ENCODE measurements at regions of chr11 and their contacts with region 1.

Region 1: GRCh38 chr11:67401495-67402191 is at the start of gene PPP1CA:
- DNase-seq: peak; percentile 85
- H3K4me3 ChIP-seq: peak within 1 kb of the TSS; percentile 79 to 89 (median 89)
- H3K27ac ChIP-seq: peak within 1 kb of the TSS; percentile 81
- H3K4me1 ChIP-seq: peaks cover 18% of the 10 kb centered on the region
- H3K27me3 ChIP-seq: no peaks in the 10 kb centered on the region
- CTCF ChIP-seq: peak in 1 of 2 donors; percentile 26
- POLR2A ChIP-seq: peak; percentile 90
- total RNA-seq, gene PPP1CA: 192 and 202 TPM in 2 replicates

Region 2: GRCh38 chr11:67373925-67374618 is 27.6 kb before region 1 on chr11:
- CTCF ChIA-PET with region 1: interaction called, 30 read pairs
- POLR2A ChIA-PET with region 1: interaction called, 4 read pairs
- dilution Hi-C with region 1: no loop called
- intact Hi-C with region 1: no loop called
- DNase-seq: peak; percentile 82
- H3K4me3 ChIP-seq: peak overlapping the region; percentile 28 to 86 (median 64)
- H3K27ac ChIP-seq: peak overlapping the region; percentile 33
- H3K4me1 ChIP-seq: peaks cover 37% of the 10 kb centered on the region
- H3K27me3 ChIP-seq: peaks cover 0 to 3% of the 10 kb centered on the region in 2 experiments
- CTCF ChIP-seq: peak; percentile 60 to 79
- POLR2A ChIP-seq: peak; percentile 58

Region 3: GRCh38 chr11:67391304-67392132 is 10.1 kb before region 1 on chr11 and contains the start of gene RAD9A:
- CTCF ChIA-PET with region 1: interaction called, 32 read pairs
- POLR2A ChIA-PET with region 1: interaction called, 11 read pairs
- dilution Hi-C with region 1: no loop called
- intact Hi-C with region 1: loop called (anchors 1 kb)
- DNase-seq: peak; percentile 90
- H3K4me3 ChIP-seq: peak within 1 kb of the TSS; percentile 68 to 80 (median 76)
- H3K27ac ChIP-seq: peak within 1 kb of the TSS; percentile 56
- H3K4me1 ChIP-seq: peaks cover 10% of the 10 kb centered on the region
- H3K27me3 ChIP-seq: no peaks in the 10 kb centered on the region
- CTCF ChIP-seq: no peak
- POLR2A ChIP-seq: peak; percentile 82
- total RNA-seq, gene RAD9A: 18.4 and 24.6 TPM in 2 replicates

Region 4: DNA sequence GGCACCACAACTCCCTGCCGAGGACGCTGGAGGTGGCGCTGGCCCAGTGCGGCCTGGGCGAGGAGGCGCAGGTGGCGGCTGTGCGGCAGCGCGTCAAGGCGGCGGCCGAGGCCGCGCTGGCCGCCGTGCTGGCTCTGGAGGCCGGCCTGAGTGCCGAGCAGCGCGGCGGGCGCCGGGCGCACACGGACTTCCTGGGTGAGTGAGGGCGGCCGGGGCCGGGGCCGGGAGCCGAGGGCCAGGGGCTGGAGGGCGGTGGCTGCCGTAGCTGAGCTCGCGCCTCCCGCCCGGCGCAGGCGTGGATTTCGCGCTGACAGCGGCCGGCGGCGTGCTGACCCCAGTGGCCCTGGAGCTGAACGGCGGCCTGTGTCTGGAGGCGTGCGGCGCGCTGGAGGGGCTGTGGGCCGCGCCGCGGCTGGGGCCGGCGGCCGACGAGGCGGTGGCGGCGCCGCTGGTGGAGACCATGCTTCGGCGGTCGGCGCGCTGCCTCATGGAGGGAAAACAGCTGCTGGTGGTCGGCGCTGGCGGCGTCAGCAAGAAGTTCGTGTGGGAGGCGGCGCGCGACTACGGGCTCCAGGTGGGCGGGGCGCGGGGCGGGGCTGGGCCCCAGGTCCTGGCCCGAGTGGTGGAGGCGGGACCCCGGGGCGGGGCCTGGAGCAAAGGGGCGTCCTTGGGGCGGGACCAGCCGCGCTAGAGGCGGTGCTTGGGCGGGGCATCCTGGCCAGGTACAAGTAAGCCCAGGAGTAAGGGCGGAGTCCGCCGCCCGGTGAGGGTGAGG is 19.2 kb after region 1 on chr11:
- CTCF ChIA-PET with region 1: interaction called, 19 read pairs
- POLR2A ChIA-PET with region 1: interaction called, 8 read pairs
- dilution Hi-C with region 1: no loop called
- intact Hi-C with region 1: loop called (anchors 1 kb)
- DNase-seq: peak; percentile 92
- H3K4me3 ChIP-seq: peak overlapping the region in 2 of 3 experiments; percentile 37 to 56
- H3K27ac ChIP-seq: peak overlapping the region; percentile 51
- H3K4me1 ChIP-seq: peaks cover 4% of the 10 kb centered on the region
- H3K27me3 ChIP-seq: peaks cover 0 to 4% of the 10 kb centered on the region in 2 experiments
- CTCF ChIP-seq: no peak
- POLR2A ChIP-seq: peak; percentile 66

Region 5: DNA sequence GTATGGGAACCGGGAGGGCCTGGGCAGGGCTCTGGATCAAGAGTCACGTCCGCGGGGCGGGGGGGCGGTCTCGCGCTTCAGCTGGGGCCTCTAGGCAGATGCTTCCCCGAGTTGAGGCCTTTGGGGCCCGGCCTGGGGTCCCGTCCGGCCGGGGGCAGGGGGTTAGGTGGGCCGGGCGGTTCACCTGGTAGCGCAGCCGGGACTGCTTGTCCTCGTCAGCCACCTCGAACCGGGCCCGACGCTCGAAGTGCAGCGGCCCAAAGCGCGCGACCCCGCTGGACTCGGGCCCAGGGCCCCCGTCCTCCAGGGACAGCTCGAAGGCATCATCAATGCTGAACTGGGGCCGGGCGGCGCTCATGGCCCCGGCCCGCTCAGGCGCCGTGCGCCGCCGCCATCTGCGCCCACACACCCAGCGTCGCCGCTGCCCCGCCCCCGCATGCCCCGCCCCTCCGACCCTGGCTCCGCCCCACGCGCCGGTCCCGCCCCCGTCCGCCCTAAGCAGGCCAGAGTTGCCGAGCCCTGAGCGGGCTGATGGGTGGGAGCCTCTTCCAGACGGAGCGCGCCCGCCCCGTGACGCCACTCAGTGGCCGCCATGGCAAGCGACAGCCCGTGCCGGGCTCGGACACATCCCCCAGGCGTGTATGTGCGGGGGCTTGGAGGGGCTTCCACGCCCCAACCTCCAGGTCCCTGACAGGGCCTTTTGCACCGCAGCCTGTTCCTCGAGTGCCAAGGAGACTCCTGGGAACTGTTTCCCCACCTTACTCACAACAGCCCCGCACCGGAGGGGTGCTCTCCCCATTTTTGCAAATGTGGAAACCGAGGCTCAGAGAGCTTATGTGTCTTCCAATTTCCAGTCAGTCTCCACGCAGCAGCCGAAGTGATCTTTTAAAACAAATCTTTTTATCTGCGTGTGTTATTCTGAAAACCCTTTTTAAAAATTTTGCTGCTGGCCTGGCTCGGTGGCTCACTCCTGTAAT is 67.5 kb after region 1 on chr11 and contains the start of gene TMEM134:
- CTCF ChIA-PET with region 1: interaction called, 26 read pairs
- POLR2A ChIA-PET with region 1: no interaction called
- dilution Hi-C with region 1: no loop called
- intact Hi-C with region 1: loop called (anchors 1 kb)
- DNase-seq: peak; percentile 88
- H3K4me3 ChIP-seq: peak within 1 kb of the TSS; percentile 64 to 79 (median 73)
- H3K27ac ChIP-seq: peak within 1 kb of the TSS; percentile 37
- H3K4me1 ChIP-seq: peaks cover 14% of the 10 kb centered on the region
- H3K27me3 ChIP-seq: no peaks in the 10 kb centered on the region
- CTCF ChIP-seq: peak; percentile 27 to 65
- POLR2A ChIP-seq: peak; percentile 90
- total RNA-seq, gene TMEM134: 33.4 and 41.6 TPM in 2 replicates

Region 6: GRCh38 chr11:67492801-67493547 is 91.3 kb after region 1 on chr11:
- CTCF ChIA-PET with region 1: interaction called, 10 read pairs
- POLR2A ChIA-PET with region 1: no interaction called
- dilution Hi-C with region 1: no loop called
- intact Hi-C with region 1: no loop called
- DNase-seq: no peak
- H3K4me3 ChIP-seq: no peak overlapping the region
- H3K27ac ChIP-seq: no peak overlapping the region
- H3K4me1 ChIP-seq: no peaks in the 10 kb centered on the region
- H3K27me3 ChIP-seq: no peaks in the 10 kb centered on the region
- CTCF ChIP-seq: no peak
- POLR2A ChIP-seq: no peak

Region 7: DNA sequence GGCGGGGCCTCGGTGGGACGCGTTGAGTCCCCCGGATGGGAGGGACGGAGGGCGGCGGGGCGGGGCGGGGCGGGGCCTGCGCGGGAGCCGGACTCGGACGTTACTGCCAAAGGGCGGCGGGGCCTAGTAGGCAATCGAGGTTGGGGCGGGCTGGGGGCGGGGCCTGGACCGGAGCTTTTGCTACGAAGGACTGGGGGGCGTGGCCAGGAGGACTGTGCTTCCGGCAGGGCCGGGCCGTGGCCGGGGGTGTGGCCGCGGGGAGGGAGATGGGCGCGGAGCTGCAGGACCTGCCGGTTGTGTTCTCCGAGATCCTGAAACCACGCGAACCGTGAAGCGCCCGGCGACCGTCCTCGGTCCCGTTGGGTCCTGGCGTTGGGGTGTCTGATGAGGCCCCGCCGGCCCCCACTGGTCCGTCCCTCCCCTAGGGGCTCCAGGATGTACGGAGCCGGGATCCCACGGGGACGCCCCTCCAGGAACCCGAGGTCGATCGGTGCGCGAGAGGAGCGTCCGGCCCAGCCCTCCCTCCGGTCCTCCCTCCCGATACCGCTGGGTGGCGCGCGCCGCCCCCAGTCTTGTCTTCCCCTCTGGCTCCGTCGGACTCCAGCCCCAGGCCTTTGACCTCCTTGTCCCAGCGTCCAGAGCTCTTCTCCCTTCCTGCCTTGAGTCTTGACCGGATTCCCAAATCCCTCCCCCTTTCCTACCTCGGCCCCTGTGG is 228.7 kb after region 1 on chr11:
- CTCF ChIA-PET with region 1: no interaction called
- POLR2A ChIA-PET with region 1: no interaction called
- dilution Hi-C with region 1: no loop called
- intact Hi-C with region 1: no loop called
- DNase-seq: peak; percentile 96
- H3K4me3 ChIP-seq: peak overlapping the region; percentile 39 to 60 (median 55)
- H3K27ac ChIP-seq: peak overlapping the region; percentile 58
- H3K4me1 ChIP-seq: peaks cover 4% of the 10 kb centered on the region
- H3K27me3 ChIP-seq: no peaks in the 10 kb centered on the region
- CTCF ChIP-seq: peak; percentile 79 to 80
- POLR2A ChIP-seq: peak; percentile 75

Region 8: DNA sequence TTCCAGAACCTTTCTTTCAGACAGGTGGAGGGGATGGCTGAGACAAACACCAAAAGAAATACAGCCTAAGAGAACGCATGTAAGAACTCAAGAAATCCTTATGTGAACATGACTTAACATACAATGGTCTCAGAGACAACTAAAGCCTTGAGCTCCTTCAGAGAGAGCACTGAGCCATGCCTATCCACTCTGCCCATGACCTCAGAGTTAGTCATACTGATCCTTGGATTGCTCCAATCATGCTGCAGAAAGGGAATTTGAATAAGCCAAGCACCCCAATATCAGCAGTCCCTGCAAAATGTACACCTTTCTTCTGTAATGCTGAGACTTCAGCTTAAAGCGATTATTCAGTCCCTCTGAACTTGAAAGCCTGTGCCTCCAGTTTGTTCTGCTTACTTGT is 762.8 kb after region 1 on chr11:
- CTCF ChIA-PET with region 1: no interaction called
- POLR2A ChIA-PET with region 1: no interaction called
- dilution Hi-C with region 1: no loop called
- intact Hi-C with region 1: no loop called
- DNase-seq: no peak
- H3K4me3 ChIP-seq: no peak overlapping the region
- H3K27ac ChIP-seq: no peak overlapping the region
- H3K4me1 ChIP-seq: no peaks in the 10 kb centered on the region
- H3K27me3 ChIP-seq: no peaks in the 10 kb centered on the region
- CTCF ChIP-seq: no peak
- POLR2A ChIP-seq: no peak

Region 9: GRCh38 chr11:69027704-69028372 is 1626.2 kb after region 1 on chr11:
- CTCF ChIA-PET with region 1: no interaction called
- POLR2A ChIA-PET with region 1: no interaction called
- dilution Hi-C with region 1: no loop called
- intact Hi-C with region 1: no loop called
- DNase-seq: no peak
- H3K4me3 ChIP-seq: no peak overlapping the region
- H3K27ac ChIP-seq: no peak overlapping the region
- H3K4me1 ChIP-seq: no peaks in the 10 kb centered on the region
- H3K27me3 ChIP-seq: peaks cover 0 to 5% of the 10 kb centered on the region in 2 experiments
- CTCF ChIP-seq: no peak
- POLR2A ChIP-seq: no peak